Dorsolateral prefrontal cortex (tissue), 120 donors: ENCODE measurements at regions of chr6 and their contacts with region 1.

Region 1: GRCh38 chr6:106979427-106979884 is 4.9 kb upstream of the CD24 start:
- DNase-seq: peak; percentile 67 to 92 (median 86)
- H3K4me3 ChIP-seq: no peak overlapping the region
- H3K27ac ChIP-seq: no peak overlapping the region
- H3K27me3 ChIP-seq: peaks cover under 1 to 73% (median 31%) of the 10 kb centered on the region in 45 donors
- CTCF ChIP-seq: peak; percentile 83 to 97 (median 93)

Region 2: DNA sequence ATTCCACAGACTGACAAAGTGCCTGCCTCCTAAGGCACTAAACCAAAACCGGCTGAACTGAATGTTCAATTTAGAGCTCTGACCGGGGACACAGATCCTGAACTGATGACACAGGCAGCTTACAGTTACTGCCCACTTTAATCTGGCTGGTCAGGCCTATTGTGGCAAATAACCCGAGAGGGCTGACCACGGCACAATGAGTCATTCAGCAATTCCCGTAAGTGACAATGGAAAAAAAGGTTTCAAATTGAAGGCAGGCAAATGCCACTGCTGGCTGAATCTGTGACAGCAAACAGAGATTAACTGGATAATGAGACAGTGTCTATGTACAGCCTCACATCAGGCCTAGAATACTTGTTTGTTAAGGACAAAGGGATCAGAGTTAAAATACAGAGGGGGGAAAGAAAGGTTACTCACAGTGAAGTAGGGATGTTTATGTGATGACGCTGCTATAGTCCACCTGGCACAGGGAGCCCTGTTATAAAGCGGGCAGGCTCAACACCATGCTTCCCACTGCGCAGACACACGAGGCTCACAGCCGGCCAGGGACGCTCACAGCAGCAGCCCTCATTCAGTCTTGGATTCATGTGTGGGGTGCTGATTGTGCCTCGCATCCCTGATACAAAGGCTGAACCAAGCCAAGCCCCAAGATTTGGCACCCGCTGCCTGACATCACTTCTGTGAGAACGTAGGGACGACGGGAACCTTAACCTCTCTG is 404.6 kb before region 1 on chr6:
- intact Hi-C with region 1: loop called in 1 of 2 experiments (anchors 10 kb)
- DNase-seq: peak in 5 of 10 donors; percentile 32 to 68 (median 48)
- H3K4me3 ChIP-seq: peak overlapping the region in 4 of 59 donors; percentile 1 to 8 (median 4)
- H3K27ac ChIP-seq: peak overlapping the region in 52 of 59 donors; percentile 12 to 92 (median 72)
- H3K27me3 ChIP-seq: no peaks in the 10 kb centered on the region
- CTCF ChIP-seq: peak in 1 of 56 donors; percentile 10

Region 3: DNA sequence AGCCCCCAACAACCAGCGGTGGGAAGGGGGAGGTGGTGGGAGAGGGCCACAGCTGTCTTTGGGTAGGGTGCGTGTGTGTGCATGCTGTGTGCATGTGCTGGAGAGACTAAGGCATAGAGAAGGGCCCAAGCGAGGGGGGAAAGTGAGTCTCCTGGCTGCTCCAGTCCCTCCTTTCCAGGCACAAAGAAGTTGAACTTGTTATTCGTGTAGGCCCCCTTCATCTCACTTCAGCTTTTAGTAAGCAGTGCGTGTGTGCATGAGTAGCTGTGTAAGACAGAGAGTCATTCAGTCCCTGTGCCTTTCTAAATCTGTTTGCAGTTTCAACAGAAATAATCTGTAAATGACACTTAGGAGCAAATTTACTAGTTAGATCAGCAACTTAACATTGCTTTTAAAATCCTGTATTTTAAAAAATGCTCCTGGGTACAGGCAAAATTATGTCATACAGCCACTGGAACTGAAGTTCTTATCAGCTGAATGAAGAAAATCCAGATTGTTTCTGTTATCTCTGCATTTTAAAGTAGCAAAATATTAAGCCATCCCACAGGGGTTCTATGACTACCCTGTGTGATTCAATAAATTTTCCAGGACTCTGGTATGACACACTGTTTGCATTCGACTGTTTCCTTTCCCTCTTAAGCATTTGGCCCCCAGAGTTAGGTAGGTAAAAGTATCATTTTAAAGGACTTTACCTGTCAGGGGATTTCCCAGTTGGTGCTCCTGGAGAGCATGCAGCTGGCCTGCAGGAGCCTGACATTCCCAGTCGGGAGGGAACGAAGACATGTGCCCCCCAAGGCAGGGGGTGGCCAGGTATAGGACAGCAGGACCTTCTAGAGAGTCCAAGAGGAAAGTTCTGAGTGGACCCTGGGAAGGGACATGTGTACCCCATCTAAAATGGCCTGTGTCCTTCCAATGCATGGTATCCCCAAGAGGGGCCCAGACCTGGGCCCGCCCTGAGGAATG is 87.5 kb after region 1 on chr6:
- intact Hi-C with region 1: no loop called
- DNase-seq: no peak
- H3K4me3 ChIP-seq: no peak overlapping the region
- H3K27ac ChIP-seq: no peak overlapping the region
- H3K27me3 ChIP-seq: no peaks in the 10 kb centered on the region
- CTCF ChIP-seq: no peak

Region 4: DNA sequence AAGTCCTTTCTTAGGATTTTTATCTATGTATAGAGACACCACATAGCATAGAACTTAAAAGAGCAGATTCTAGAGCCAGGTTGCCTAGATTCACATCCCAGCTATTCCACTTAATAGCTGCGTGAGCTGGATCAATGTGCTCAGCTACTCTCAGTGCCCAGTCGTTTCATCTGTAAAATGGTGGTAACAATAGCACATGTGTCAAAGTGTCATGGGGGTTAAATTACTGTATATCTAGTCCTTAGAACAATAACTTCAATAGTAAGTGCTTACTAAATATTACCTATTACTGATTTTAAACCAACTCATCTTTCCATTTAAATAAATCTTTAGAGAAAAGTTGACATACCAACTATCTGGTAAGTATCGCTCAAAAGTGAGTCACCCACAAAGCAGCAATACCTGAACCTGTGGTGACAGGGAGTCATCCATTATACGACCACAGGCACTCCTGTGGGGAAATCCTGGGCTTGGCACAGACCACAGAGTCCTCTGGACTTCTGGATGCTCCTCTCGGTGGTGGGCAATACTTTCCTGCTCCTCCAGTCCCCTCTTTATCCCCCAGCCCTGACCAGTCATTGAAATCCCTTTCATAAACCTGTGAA is 325.1 kb after region 1 on chr6:
- intact Hi-C with region 1: no loop called
- DNase-seq: no peak
- H3K4me3 ChIP-seq: no peak overlapping the region
- H3K27ac ChIP-seq: no peak overlapping the region
- H3K27me3 ChIP-seq: no peaks in the 10 kb centered on the region
- CTCF ChIP-seq: no peak